Motor neuron (in vitro differentiated cells): ENCODE measurements at regions of chr7 and their contacts with region 1.

Region 1: DNA sequence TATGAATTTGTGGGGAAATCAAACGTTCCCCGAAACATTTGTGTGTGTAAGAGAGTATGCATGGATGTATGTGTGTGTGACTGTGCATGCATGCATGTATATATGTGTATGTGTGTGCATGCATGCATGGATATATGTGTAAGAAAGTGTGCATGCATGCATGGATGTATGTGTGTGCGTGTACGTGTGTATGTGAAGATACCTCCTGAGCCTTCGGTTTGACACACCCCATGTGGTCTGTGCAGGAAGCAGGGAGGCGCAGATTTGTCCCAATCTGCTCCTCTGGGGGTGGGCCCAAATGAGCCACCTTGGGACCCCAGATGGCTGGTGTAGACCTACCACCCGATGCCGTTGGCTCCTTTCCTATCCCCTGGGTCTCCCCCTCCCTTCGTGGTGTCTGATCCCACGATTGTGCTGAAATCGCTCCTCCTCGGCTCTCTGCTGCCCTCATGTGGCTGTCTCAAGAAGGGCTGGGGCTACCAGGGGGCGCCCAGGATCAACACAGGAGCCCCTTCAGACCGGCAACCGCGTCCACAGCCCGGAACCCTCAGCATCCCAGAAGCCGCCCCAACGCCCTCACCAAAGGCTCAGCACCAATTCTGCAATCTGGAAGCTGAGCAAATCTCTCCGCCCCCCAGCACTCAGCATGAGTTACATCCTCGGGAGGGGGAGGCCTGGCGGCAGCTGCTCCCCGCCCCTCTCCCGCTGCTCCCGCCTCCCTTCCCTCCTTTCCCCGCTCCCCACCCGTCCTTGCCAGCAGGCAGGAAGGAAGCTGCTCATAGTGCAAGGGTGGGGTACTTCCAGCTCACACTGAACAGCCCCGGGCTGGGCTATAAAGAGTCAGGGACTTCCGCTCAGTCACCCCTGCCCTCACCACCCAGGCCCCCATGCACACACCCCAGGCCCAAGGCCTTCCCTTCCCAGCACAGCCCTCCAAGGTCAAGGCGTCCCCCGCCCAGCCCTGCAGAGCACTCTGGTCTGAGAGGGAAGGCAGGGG is 2.3 kb upstream of the NOS3 start:
- ATAC-seq: peak; percentile 75 to 89 (median 86)
- H3K4me3 ChIP-seq: peak overlapping the region in 1 of 5 donors; percentile 1
- H3K27ac ChIP-seq: peak overlapping the region; percentile 15 to 77
- H3K4me1 ChIP-seq: peaks cover 31 to 47% of the 10 kb centered on the region in 2 donors

Region 2: DNA sequence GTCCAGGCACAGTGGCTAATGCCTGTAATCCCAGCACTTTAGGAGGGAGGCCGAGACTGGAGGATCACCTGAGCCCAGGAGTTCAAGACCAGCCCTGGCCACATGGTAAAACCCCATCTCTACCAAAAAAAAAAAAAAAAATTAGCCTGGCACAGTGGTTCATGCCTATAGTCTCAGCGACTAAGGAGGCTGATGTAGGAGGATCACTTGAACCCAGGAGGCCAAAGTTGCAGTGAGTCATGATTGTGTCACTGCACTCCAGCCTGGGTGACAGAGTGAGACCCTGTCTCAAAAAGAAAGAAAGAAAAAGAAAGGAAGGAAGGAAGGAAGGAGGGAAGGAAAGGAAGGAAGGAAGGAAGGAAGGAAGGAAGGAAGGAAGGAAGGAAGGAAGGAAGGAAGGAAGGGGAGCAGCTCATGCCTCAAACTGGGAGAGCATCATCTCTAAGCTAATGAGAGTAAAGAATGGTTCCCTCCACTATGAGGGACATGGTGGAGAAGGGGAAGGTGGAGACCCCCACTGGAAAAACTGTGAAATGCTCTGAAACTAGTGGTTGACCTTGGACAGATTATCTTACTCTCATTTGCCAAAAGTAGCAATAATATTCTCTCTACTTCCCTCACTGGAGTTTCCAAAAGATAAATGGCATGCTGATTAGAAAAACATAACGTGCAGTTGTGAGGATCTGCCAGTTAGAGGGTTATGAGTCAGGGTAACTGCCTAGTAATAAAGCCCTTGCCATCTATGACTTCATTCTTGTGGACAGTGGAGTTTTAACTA is 234.5 kb before region 1 on chr7:
- in situ Hi-C with region 1: no loop called
- ATAC-seq: peak in 2 of 8 experiments; percentile 48 to 55
- H3K4me3 ChIP-seq: no peak overlapping the region
- H3K27ac ChIP-seq: no peak overlapping the region
- H3K4me1 ChIP-seq: no peaks in the 10 kb centered on the region

Region 3: GRCh38 chr7:150898475-150899011 is 90.0 kb before region 1 on chr7:
- in situ Hi-C with region 1: loop called in 3 of 9 experiments (anchors 10 kb)
- ATAC-seq: peak; percentile 59 to 95 (median 76)
- H3K4me3 ChIP-seq: no peak overlapping the region
- H3K27ac ChIP-seq: no peak overlapping the region
- H3K4me1 ChIP-seq: peaks cover 16 to 27% of the 10 kb centered on the region in 2 donors

Region 4: DNA sequence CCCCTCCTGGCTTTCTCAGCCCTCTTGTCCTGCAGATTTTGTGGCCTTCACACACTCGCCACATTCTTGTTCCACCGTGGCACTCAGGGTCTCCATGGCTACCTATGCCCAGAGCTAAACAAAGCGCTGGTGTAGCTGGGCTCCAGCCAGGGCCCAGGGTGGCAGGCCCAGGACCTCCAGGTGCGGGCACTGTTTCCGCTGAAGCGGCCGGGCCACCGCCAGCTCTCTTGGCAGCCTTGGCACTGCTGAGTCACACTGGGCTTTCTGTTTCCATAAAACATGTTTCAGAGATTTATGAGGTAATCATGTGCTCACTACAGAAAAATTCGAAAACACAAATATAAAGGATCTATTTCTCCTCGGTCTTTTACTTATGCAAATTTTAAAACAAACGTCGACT is 84.9 kb before region 1 on chr7:
- in situ Hi-C with region 1: loop called in 3 of 9 experiments (anchors 10 kb)
- ATAC-seq: peak in 4 of 8 experiments; percentile 28 to 87 (median 62)
- H3K4me3 ChIP-seq: no peak overlapping the region
- H3K27ac ChIP-seq: no peak overlapping the region
- H3K4me1 ChIP-seq: peaks cover 16 to 27% of the 10 kb centered on the region in 2 donors

Region 5: DNA sequence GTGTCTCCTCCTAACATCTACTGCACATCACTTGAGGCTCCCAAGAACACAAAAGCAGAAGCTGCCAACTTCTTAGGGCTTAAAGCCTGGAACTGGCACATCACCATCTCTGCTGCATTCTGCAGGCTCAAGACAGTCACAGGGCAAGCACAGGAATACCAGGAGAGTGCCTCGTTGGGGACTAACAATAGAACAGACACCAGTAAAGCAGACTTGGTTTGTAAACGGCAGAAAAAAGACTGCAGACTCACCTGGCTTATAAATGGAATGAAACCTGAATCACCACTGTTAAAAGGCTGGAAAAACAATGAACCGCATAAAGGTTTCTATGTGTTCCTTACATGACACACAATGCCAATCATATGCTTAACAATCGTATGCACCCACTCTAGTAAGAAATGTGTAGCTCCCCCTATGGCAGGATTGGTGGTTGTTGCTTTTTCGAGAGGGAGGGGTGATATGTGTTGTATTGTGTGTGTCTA is 518.4 kb after region 1 on chr7:
- in situ Hi-C with region 1: no loop called
- ATAC-seq: peak in 2 of 8 experiments; percentile 5 to 12
- H3K4me3 ChIP-seq: no peak overlapping the region
- H3K27ac ChIP-seq: no peak overlapping the region
- H3K4me1 ChIP-seq: peaks cover 11 to 17% of the 10 kb centered on the region in 2 donors